Naive thymus-derived CD4-positive, alpha-beta T cell (primary cell): ENCODE measurements at regions of chr4 and their contacts with region 1.

Region 1: GRCh38 chr4:173168396-173169177 is at the start of gene GALNT7:
- DNase-seq: peak; percentile 27 to 71 (median 46)
- ATAC-seq: peak; percentile 68
- H3K4me3 ChIP-seq: peak within 1 kb of the TSS; percentile 76
- H3K4me3 Mint-ChIP-seq: peak within 1 kb of the TSS; percentile 93 to 98 (median 96)
- H3K27ac ChIP-seq: peak within 1 kb of the TSS; percentile 73
- H3K27ac Mint-ChIP-seq: peak within 1 kb of the TSS; percentile 80 to 96 (median 91)
- H3K4me1 ChIP-seq: peaks cover 15 to 23% of the 10 kb centered on the region in 2 donors
- H3K4me1 Mint-ChIP-seq: peaks cover 30 to 61% (median 48%) of the 10 kb centered on the region in 7 donors
- H3K27me3 ChIP-seq: no peaks in the 10 kb centered on the region
- H3K27me3 Mint-ChIP-seq: no peaks in the 10 kb centered on the region
- total RNA-seq, gene GALNT7: 10.2 to 24.1 (median 21.2) TPM

Region 2: GRCh38 chr4:173025131-173025530 is 143.5 kb before region 1 on chr4:
- CTCF ChIA-PET with region 1: no interaction called
- POLR2A ChIA-PET with region 1: interaction called, 4 read pairs
- intact Hi-C with region 1: loop called (anchors 2 to 5 kb)
- DNase-seq: peak in 7 of 9 donors; percentile 10 to 50 (median 42)
- ATAC-seq: peak; percentile 67
- H3K4me3 ChIP-seq: no peak overlapping the region
- H3K4me3 Mint-ChIP-seq: no peak overlapping the region
- H3K27ac ChIP-seq: no peak overlapping the region
- H3K27ac Mint-ChIP-seq: no peak overlapping the region
- H3K4me1 ChIP-seq: no peaks in the 10 kb centered on the region
- H3K4me1 Mint-ChIP-seq: peaks cover 0 to 4% (median 0%) of the 10 kb centered on the region in 7 donors
- H3K27me3 ChIP-seq: no peaks in the 10 kb centered on the region
- H3K27me3 Mint-ChIP-seq: peaks cover 0 to 7% (median 5%) of the 10 kb centered on the region in 5 donors

Region 3: GRCh38 chr4:173257732-173258717 is 89.4 kb after region 1 on chr4:
- CTCF ChIA-PET with region 1: interaction called, 3 read pairs
- POLR2A ChIA-PET with region 1: no interaction called
- intact Hi-C with region 1: loop called (anchors 2 to 5 kb)
- DNase-seq: peak in 8 of 9 donors; percentile 26 to 62 (median 48)
- ATAC-seq: peak; percentile 83
- H3K4me3 ChIP-seq: no peak overlapping the region
- H3K4me3 Mint-ChIP-seq: no peak overlapping the region
- H3K27ac ChIP-seq: no peak overlapping the region
- H3K27ac Mint-ChIP-seq: no peak overlapping the region
- H3K4me1 ChIP-seq: no peaks in the 10 kb centered on the region
- H3K4me1 Mint-ChIP-seq: peaks cover 0 to 12% (median 5%) of the 10 kb centered on the region in 7 donors
- H3K27me3 ChIP-seq: no peaks in the 10 kb centered on the region
- H3K27me3 Mint-ChIP-seq: no peaks in the 10 kb centered on the region

Region 4: GRCh38 chr4:173334085-173334772 is 165.6 kb after region 1 on chr4 and contains the start of gene HMGB2:
- CTCF ChIA-PET with region 1: no interaction called
- POLR2A ChIA-PET with region 1: interaction called, 8 read pairs
- intact Hi-C with region 1: loop called (anchors 1 to 2 kb)
- DNase-seq: peak; percentile 96 to 100 (median 100)
- ATAC-seq: peak; percentile 97
- H3K4me3 ChIP-seq: peak within 1 kb of the TSS; percentile 89
- H3K4me3 Mint-ChIP-seq: peak within 1 kb of the TSS; percentile 93 to 100 (median 99)
- H3K27ac ChIP-seq: peak within 1 kb of the TSS; percentile 98
- H3K27ac Mint-ChIP-seq: peak within 1 kb of the TSS; percentile 97 to 100 (median 99)
- H3K4me1 ChIP-seq: peaks cover 7 to 18% of the 10 kb centered on the region in 2 donors
- H3K4me1 Mint-ChIP-seq: peaks cover 20 to 55% (median 30%) of the 10 kb centered on the region in 7 donors
- H3K27me3 ChIP-seq: no peaks in the 10 kb centered on the region
- H3K27me3 Mint-ChIP-seq: peaks cover 6 to 18% (median 11%) of the 10 kb centered on the region in 5 donors
- total RNA-seq, gene HMGB2: 89.3 to 542 (median 106) TPM

Region 5: GRCh38 chr4:173420324-173420752 is 251.8 kb after region 1 on chr4:
- CTCF ChIA-PET with region 1: no interaction called
- POLR2A ChIA-PET with region 1: no interaction called
- intact Hi-C with region 1: loop called (anchors 1 to 5 kb)
- DNase-seq: peak in 5 of 9 donors; percentile 10 to 40 (median 28)
- ATAC-seq: peak; percentile 37
- H3K4me3 ChIP-seq: no peak overlapping the region
- H3K4me3 Mint-ChIP-seq: peak overlapping the region in 1 of 10 donors; percentile 21
- H3K27ac ChIP-seq: no peak overlapping the region
- H3K27ac Mint-ChIP-seq: peak overlapping the region in 4 of 9 donors; percentile 4 to 22 (median 8)
- H3K4me1 ChIP-seq: peaks cover 2 to 5% of the 10 kb centered on the region in 2 donors
- H3K4me1 Mint-ChIP-seq: peaks cover 6 to 25% (median 6%) of the 10 kb centered on the region in 7 donors
- H3K27me3 ChIP-seq: no peaks in the 10 kb centered on the region
- H3K27me3 Mint-ChIP-seq: peaks cover 0 to 6% (median 0%) of the 10 kb centered on the region in 5 donors